Cardiac septum (tissue), 1 donor: ENCODE measurements at regions of chr11 and their contacts with region 1.

Region 1: GRCh38 chr11:62394825-62395538 is 23.9 kb upstream of the SCGB1A1 start:
- DNase-seq: peak; percentile 85

Region 2: DNA sequence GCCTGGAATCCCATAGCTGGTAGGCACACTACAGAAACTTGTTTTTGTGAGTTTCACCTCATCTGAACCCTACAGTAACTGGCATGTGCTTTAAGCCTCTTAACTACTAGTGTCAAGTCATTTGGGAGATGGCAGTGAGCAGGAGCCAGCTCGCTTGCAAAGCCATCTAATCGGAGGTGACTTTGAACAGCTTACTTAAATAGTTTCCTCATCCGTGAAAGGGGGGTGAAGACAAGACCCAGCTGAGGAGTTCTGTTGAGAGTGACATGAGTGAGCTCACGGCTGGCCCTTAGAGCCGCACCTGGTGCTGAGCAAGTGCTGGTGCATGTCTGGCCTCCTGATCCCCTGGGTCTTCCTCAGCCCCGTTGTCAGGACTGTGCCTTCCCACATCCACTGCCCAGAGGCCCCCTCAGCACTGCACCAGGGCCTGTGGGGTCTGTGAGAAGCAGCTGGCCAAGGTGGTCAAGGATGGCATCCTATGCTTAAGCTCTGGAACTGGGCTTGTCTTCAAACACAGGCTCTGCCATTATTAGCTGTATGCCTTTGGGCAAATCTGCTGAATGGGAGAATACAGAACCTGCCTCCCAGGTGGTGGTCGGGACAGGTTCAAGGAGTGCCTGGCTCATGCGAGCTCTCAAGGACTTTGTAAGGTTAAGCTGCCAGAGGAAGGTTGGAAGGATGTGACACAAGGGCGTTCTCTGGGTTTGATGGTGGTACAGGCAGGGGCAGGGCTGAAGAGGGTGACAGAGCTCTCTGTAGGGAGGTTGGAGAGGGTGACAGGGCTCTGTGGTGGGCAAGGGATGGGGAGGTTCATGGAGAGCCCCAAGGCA is 243.9 kb before region 1 on chr11:
- intact Hi-C with region 1: no loop called
- DNase-seq: peak; percentile 33

Region 3: GRCh38 chr11:62306227-62306626 is 88.8 kb before region 1 on chr11:
- intact Hi-C with region 1: no loop called
- DNase-seq: no peak

Region 4: DNA sequence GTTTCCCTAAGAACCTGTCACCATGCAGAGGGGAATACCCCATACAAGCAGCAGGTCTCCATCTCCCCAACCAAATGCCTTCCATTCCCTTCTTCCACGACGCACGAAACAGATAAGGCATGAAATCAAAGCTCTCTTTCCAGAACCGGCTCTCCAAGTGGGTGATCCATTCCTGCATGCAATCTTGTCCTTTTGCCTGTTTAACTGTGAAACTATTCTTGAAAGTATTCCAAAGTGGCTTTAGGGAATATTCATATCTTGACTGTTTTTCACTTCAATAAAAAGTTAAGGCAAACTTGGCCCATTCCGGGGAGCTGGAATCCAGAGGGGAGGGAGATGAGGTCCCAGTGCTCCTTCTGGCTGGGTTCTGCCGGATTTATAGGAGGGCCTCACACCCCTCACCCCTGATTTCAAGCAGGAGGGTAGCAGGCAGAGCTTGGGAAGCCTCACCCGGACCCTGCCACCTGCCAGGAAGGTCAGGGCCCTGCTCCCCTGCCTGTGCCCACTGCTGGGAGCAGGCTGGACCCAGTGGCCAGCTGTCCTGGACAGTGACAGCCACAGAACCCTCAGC is 84.7 kb after region 1 on chr11:
- intact Hi-C with region 1: no loop called
- DNase-seq: no peak

Region 5: GRCh38 chr11:62497132-62497915 is 102.3 kb after region 1 on chr11:
- intact Hi-C with region 1: loop called (anchors 5 kb)
- DNase-seq: no peak

Region 6: DNA sequence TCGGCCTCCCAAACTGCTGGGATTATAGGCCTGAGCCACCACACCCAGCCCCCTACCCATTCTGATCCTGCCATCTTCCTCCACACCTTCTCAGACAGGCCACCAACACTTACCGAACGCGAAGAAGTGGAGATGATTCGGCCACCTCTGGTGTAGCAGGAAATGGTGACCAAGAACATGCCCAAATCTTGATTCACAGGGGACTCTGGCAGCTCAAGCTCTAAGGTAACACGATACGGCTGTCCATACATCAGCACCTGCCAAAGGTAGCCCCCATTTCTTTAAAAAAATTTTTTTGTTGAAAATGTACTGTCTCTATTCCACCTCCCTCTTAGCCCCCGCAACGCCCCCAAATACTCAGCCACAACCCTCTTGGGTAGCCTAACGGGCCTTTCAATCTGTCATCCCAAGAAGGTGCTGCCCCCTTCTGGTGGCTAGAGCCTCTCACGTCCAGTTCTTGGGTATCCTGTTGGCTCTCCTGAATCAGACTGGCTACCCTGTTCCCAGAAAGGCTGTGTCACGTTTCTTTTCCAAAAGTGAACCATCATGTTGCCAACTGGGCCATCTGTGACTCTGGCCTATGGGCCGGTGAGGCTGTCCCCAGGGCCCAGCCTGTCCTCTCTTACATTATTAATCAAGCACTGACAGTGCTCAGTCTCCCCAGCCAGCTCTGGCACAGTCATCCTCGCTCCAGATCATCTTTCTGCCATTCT is 299.6 kb after region 1 on chr11:
- intact Hi-C with region 1: loop called (anchors 5 kb)
- DNase-seq: peak; percentile 90

Region 7: DNA sequence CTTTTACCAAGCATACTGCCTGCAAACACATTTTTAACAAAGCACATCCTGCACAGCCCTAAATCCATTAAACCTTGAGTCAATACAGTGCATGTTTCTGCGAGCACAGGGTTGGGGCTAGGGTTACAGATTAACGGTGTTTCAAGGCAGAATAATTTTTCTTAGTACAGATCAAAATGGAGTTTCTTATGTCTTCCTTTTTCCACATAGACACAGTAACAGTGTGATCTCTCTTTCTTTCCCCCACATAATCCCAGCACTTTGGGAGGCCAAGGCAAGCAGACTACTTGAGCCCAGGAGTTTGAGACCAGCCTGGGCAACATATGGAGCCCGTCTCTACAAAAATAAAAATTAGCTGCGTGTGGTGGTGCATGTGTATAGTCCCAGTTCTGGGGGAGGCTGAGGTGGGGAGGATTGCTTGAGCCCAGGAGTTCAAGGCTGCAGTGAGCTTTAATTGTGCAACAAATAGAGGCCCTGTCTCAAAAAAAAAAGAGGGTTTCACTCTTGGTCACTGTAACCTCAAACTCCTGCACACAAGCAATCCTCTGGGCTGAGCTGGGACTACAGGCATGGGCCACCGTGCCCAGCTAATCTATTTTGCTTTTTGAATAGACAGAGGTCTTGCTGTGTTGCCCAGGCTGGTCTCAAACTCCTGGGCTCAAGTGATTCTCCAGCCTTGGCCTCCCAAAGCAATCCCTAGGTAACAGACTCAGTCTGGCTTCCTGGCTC is 466.0 kb after region 1 on chr11:
- intact Hi-C with region 1: loop called (anchors 5 kb)
- DNase-seq: no peak